ENCODE measurements at regions of chr11 and their contacts with region 1.

Region 1: GRCh38 chr11:114348200-114349191 is 51.8 kb downstream of the C11orf71 start:
- DNase-seq: no peak
- ATAC-seq: peak; percentile 74 to 80

Region 2: GRCh38 chr11:114307524-114308203 is 40.8 kb before region 1 on chr11:
- intact Hi-C with region 1: no loop called
- DNase-seq: peak; percentile 82
- ATAC-seq: peak; percentile 85 to 87

Region 3: GRCh38 chr11:114439229-114440120 is 91.0 kb after region 1 on chr11 and contains the start of gene REXO2:
- intact Hi-C with region 1: loop called in 1 of 2 experiments (anchors 5 kb)
- DNase-seq: peak; percentile 98
- ATAC-seq: peak; percentile 99
- total RNA-seq, gene REXO2: 92.7 to 112 TPM